ENCODE measurements at regions of chr12 and their contacts with region 1.

Region 1: DNA sequence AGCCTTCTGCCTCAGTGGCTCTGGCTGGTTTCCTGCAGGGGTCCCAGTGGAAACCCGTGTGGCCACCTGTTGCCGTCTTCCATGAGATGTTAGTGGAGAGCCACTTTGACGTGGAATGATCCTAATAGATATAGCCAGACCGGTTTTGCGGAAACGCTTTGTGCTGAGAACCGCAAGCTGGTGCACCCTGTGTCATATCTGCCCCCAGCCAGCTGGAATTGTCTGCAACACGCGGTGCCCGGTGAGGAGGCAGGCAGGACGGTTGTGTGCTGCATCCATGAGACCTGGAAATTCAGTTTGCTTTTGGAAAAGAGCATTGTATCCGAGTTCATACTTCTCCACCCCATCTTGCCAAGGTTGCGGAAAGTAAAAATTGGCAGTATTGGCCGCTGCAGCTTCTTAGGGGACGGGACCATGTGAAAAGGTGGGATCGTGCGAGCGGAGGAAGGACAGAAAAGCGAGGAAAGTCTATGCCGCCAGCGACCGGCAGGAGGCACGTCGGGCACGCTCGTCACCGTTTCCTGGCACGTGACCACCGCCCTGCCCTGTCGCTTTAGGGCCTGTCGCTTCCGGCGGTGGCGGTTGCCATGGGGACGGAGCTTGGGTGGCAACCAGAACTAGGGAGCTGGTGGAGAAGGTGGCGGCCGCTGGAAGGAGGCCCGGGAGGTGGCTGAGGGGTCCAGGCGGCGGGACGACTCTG is at the start of gene CFAP251:
- DNase-seq: peak; percentile 84 to 89
- ATAC-seq: peak; percentile 72 to 81
- H3K4me3 ChIP-seq: peak within 1 kb of the TSS; percentile 43 to 57 (median 48)
- H3K27ac ChIP-seq: peak within 1 kb of the TSS; percentile 21 to 51 (median 39)
- H3K4me1 ChIP-seq: peaks cover 1 to 9% of the 10 kb centered on the region in 2 donors
- H3K27me3 ChIP-seq: no peaks in the 10 kb centered on the region
- CTCF ChIP-seq: peak; percentile 64 to 89 (median 78)
- POLR2A ChIP-seq: no peak
- total RNA-seq, gene CFAP251: 0.49 to 4.9 (median 0.61) TPM

Region 2: DNA sequence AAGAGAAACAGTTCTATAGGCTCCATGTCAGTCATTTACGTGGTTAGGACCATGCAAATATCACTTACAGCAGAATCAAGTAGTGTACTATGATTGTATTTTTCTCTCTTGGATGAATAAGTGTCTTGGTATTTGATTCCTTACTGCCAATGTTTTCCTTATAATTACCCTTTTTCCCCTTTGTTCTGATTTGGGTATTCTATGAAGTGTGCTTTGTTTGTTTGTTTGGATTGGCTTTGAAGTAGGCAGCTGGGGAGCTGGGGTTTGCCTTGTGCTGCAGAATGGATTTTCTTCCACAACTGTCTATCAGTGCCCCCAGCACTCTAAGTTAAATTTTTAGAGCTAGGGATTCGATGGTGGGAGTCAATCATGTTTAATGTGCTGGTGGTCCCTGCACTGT is 193.2 kb before region 1 on chr12:
- in situ Hi-C with region 1: no loop called
- intact Hi-C with region 1: no loop called
- DNase-seq: no peak
- ATAC-seq: no peak
- H3K4me3 ChIP-seq: no peak overlapping the region
- H3K27ac ChIP-seq: no peak overlapping the region
- H3K4me1 ChIP-seq: no peaks in the 10 kb centered on the region
- H3K27me3 ChIP-seq: no peaks in the 10 kb centered on the region
- CTCF ChIP-seq: no peak
- POLR2A ChIP-seq: no peak

Region 3: GRCh38 chr12:122021822-122022526 is 103.8 kb after region 1 on chr12 and contains the start of gene BCL7A:
- in situ Hi-C with region 1: no loop called
- intact Hi-C with region 1: loop called (anchors 5 kb)
- DNase-seq: peak; percentile 40 to 79
- ATAC-seq: peak; percentile 59 to 61
- H3K4me3 ChIP-seq: peak within 1 kb of the TSS; percentile 68 to 83 (median 79)
- H3K27ac ChIP-seq: peak within 1 kb of the TSS; percentile 90 to 96 (median 92)
- H3K4me1 ChIP-seq: peaks cover 17 to 36% of the 10 kb centered on the region in 2 donors
- H3K27me3 ChIP-seq: no peaks in the 10 kb centered on the region
- CTCF ChIP-seq: peak in 1 of 5 experiments; percentile 18
- POLR2A ChIP-seq: peak; percentile 84 to 87
- total RNA-seq, gene BCL7A: 9.8 to 23.5 (median 13.7) TPM

Region 4: GRCh38 chr12:122051231-122051876 is 133.2 kb after region 1 on chr12:
- in situ Hi-C with region 1: no loop called
- intact Hi-C with region 1: loop called (anchors 5 kb)
- DNase-seq: peak; percentile 85 to 89
- ATAC-seq: peak; percentile 87 to 89
- H3K4me3 ChIP-seq: peak overlapping the region in 2 of 4 donors; percentile 13 to 36
- H3K27ac ChIP-seq: peak overlapping the region; percentile 77 to 95 (median 92)
- H3K4me1 ChIP-seq: peaks cover 32 to 38% of the 10 kb centered on the region in 2 donors
- H3K27me3 ChIP-seq: no peaks in the 10 kb centered on the region
- CTCF ChIP-seq: no peak
- POLR2A ChIP-seq: peak in 1 of 2 donors; percentile 22

Region 5: DNA sequence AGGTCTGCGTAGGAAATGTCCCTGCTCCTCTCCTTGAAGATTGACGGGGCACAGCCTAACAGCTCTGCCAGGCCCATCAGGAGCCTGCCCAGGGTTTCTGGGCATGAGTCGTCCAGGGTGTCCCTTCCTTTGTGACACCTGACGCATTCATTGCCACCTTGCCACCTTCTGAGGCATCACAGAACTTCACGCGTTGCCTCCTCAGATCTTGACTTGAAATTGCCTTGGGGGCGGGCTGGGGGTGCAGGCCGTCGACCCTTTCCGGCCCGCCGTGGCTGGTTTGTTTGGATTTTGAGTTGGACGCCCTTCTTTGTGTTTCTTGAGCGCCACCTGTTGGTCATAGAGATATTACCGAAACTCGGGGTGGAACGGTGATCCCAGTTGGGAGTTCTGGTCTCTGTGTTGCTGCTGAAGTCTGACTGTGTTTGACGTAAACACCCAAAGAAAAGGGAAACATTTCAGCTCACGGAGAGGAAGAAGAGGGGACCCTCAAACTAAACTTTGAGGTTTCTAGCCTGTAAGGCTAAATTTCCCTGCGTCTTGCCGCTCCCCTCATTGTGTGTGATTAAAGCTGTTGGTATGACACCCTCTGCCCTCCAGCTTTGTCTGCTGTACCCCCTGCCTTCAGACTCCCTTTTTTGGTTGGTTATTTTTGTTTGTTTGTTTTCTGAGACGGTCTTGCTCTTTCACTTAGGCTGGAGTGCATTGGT is 205.1 kb after region 1 on chr12:
- in situ Hi-C with region 1: no loop called
- intact Hi-C with region 1: loop called (anchors 2 kb)
- DNase-seq: peak; percentile 53 to 72
- ATAC-seq: peak; percentile 39 to 54
- H3K4me3 ChIP-seq: peak overlapping the region in 1 of 4 donors; percentile 6
- H3K27ac ChIP-seq: peak overlapping the region; percentile 80 to 97 (median 94)
- H3K4me1 ChIP-seq: peaks cover 61 to 69% of the 10 kb centered on the region in 2 donors
- H3K27me3 ChIP-seq: no peaks in the 10 kb centered on the region
- CTCF ChIP-seq: peak; percentile 78 to 93 (median 84)
- POLR2A ChIP-seq: no peak

Region 6: DNA sequence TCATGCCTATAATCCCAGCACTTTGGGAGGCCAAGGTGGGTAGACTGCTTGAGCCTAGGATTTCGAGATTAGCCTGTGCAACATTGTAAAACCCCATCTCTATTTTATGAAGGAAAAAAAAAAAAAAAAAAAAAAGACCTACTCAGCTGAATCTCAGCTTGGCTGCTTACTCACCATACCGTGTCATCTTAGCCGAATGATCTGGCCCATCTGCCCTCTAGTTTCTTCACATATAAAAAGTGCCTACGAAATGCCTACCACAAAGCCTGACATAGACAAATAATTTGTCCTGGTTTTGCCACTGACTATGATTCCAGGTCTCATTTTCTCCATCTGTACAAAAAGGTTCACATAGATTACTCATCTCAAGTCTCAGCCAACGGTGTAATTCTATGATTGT is 297.6 kb after region 1 on chr12:
- in situ Hi-C with region 1: no loop called
- intact Hi-C with region 1: no loop called
- DNase-seq: no peak
- ATAC-seq: no peak
- H3K4me3 ChIP-seq: no peak overlapping the region
- H3K27ac ChIP-seq: no peak overlapping the region
- H3K4me1 ChIP-seq: no peaks in the 10 kb centered on the region
- H3K27me3 ChIP-seq: no peaks in the 10 kb centered on the region
- CTCF ChIP-seq: no peak
- POLR2A ChIP-seq: no peak

Measured in gastrocnemius medialis (tissue), 4 donors.